GM23248 (cell line): ENCODE measurements at regions of chr9 and their contacts with region 1.

Region 1: DNA sequence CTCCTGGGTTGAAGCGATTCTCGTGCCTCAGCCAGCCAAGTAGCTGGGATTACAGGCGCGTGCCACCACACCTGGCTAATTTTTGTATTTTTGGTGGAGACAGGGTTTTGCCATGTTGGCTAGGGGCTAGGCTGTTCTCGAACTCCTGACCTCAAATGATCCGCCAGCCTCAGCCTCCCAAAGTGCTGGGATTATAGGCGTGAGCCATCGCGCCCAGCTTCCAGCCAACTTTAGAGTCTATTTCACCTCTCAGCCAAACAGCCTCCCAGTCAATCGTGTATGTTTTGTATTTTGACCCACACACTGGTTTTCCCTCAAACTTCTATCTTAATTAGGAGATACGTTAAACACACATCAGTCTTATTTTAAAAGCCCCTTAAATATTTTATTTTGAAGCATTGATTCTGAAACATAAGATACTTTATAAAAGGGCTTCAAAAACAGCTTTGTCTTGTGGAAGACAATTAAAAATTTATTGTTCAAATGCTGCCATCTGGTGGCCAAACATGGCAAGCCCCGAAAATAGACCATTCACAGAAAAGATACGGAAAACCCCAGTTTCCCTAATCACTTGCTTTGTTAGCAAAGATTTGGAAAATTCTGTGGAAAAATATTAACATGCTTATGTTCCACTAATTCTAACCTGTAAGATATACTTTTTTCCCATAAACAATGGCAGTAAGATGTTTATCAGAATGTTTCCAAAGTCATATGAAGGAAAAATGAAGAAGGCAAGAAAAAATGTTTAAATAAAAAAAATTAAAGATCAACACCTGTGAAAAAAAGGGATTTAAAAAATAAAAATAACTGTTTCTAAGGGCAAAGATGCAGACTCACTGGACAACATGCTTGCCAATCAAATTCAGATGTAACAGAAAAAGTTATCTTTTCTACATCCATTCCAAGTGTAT is 33.1 kb downstream of the APTX start:
- DNase-seq: peak; percentile 67
- H3K4me3 ChIP-seq: no peak overlapping the region
- H3K27ac ChIP-seq: peak overlapping the region; percentile 71; the same call in 1 of the 2 replicates
- H3K4me1 ChIP-seq: peaks cover 26% of the 10 kb centered on the region
- H3K27me3 ChIP-seq: no peaks in the 10 kb centered on the region

Region 2: GRCh38 chr9:32378993-32379729 is 589.2 kb before region 1 on chr9:
- in situ Hi-C with region 1: loop called (anchors 25 kb)
- DNase-seq: peak; percentile 85
- H3K4me3 ChIP-seq: peak overlapping the region; percentile 53
- H3K27ac ChIP-seq: no peak overlapping the region
- H3K4me1 ChIP-seq: 0 out of 2 replicates have a peak, but pooled peaks cover 5% of the 10 kb centered on the region
- H3K27me3 ChIP-seq: no peaks in the 10 kb centered on the region

Region 3: DNA sequence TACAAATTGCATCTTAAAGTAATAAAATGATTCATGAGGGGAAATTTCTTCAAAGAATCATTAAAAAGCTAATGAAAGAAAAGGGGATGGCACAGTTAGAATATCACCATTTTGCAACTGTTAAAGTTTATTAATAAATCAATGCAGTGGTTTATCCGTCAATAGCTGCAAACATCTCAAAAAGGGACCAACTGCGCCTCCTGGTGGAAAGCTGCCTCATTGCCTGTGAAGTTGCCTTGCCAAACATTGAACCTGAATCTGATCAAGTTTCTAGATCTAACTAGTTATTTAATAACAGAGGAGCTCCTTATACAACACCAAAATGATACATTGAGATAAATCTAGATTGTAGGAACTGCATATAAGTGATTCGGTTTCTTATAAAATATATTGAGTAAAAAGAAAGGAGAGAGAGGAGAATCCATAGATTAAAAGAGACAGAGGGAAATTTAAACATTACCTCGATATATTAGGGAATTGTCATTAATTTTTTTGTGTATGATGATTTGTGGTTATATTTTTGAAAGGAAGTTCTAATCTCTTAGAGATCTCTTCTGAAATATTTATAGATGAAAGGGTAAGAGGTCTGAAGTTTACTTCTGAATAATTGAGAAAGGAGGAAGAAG is 388.5 kb before region 1 on chr9:
- in situ Hi-C with region 1: loop called (anchors 5 kb)
- DNase-seq: peak; percentile 67
- H3K4me3 ChIP-seq: no peak overlapping the region
- H3K27ac ChIP-seq: no peak overlapping the region
- H3K4me1 ChIP-seq: no peaks in the 10 kb centered on the region
- H3K27me3 ChIP-seq: no peaks in the 10 kb centered on the region

Region 4: GRCh38 chr9:32703635-32704034 is 264.7 kb before region 1 on chr9:
- in situ Hi-C with region 1: no loop called
- DNase-seq: peak; percentile 18
- H3K4me3 ChIP-seq: no peak overlapping the region
- H3K27ac ChIP-seq: no peak overlapping the region
- H3K4me1 ChIP-seq: peaks cover 4% of the 10 kb centered on the region; the same call in 1 of the 2 replicates
- H3K27me3 ChIP-seq: peaks cover 12% of the 10 kb centered on the region

Region 5: GRCh38 chr9:32716946-32717543 is 251.3 kb before region 1 on chr9:
- in situ Hi-C with region 1: no loop called
- DNase-seq: no peak
- H3K4me3 ChIP-seq: no peak overlapping the region
- H3K27ac ChIP-seq: no peak overlapping the region
- H3K4me1 ChIP-seq: no peaks in the 10 kb centered on the region
- H3K27me3 ChIP-seq: 0 out of 2 replicates have a peak, but pooled peaks cover 6% of the 10 kb centered on the region